Activated naive CD4-positive, alpha-beta T cell treated with anti-CD3 and anti-CD28 coated beads, Interleukin-2, amount 10 ng/mL, durations not matched to agents 7 days and 5 days (primary cell): ENCODE measurements at regions of chr18 and their contacts with region 1.

Region 1: GRCh38 chr18:74116633-74117554 is 30.7 kb downstream of the FBXO15 start:
- DNase-seq: peak; percentile 54
- H3K4me3 Mint-ChIP-seq: no peak overlapping the region
- H3K27ac Mint-ChIP-seq: no peak overlapping the region
- H3K4me1 Mint-ChIP-seq: peaks cover 9% of the 10 kb centered on the region
- H3K27me3 Mint-ChIP-seq: no peaks in the 10 kb centered on the region

Region 2: GRCh38 chr18:73980289-73980979 is 136.5 kb before region 1 on chr18:
- CTCF ChIA-PET with region 1: no interaction called
- DNase-seq: no peak
- H3K4me3 Mint-ChIP-seq: no peak overlapping the region
- H3K27ac Mint-ChIP-seq: peak overlapping the region; percentile 28
- H3K4me1 Mint-ChIP-seq: peaks cover 6% of the 10 kb centered on the region
- H3K27me3 Mint-ChIP-seq: peaks cover 9% of the 10 kb centered on the region

Region 3: DNA sequence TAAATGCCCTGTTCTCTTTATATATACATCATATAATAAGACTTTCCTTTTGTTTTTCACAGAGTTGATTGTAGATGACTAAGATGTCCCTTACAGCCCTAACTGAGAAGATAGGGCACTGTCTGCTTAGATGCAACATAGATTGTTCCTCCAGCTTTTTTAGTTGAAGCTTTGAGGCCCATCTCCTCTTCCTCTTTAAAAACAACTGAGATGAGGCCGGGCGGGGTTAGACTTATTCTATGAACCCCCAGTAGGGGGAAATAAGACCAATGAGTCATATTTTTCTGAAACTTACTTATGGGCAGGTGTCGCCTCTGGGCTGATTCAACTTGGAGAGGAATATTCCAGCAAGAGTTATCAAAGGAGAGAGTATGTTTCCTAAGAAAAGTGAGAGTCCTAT is 53.9 kb before region 1 on chr18:
- CTCF ChIA-PET with region 1: interaction called, 29 read pairs
- DNase-seq: peak; percentile 53
- H3K4me3 Mint-ChIP-seq: no peak overlapping the region
- H3K27ac Mint-ChIP-seq: peak overlapping the region; percentile 71
- H3K4me1 Mint-ChIP-seq: peaks cover 43% of the 10 kb centered on the region
- H3K27me3 Mint-ChIP-seq: no peaks in the 10 kb centered on the region

Region 4: GRCh38 chr18:74073957-74074667 is 42.8 kb before region 1 on chr18:
- CTCF ChIA-PET with region 1: no interaction called
- DNase-seq: no peak
- H3K4me3 Mint-ChIP-seq: no peak overlapping the region
- H3K27ac Mint-ChIP-seq: no peak overlapping the region
- H3K4me1 Mint-ChIP-seq: no peaks in the 10 kb centered on the region
- H3K27me3 Mint-ChIP-seq: peaks cover 13% of the 10 kb centered on the region

Region 5: GRCh38 chr18:74139888-74140287 is 23.0 kb after region 1 on chr18:
- CTCF ChIA-PET with region 1: interaction called, 11 read pairs
- DNase-seq: no peak
- H3K4me3 Mint-ChIP-seq: no peak overlapping the region
- H3K27ac Mint-ChIP-seq: no peak overlapping the region
- H3K4me1 Mint-ChIP-seq: peaks cover 6% of the 10 kb centered on the region
- H3K27me3 Mint-ChIP-seq: peaks cover 7% of the 10 kb centered on the region

Region 6: GRCh38 chr18:74204526-74205152 is 87.7 kb after region 1 on chr18:
- CTCF ChIA-PET with region 1: no interaction called
- DNase-seq: no peak
- H3K4me3 Mint-ChIP-seq: no peak overlapping the region
- H3K27ac Mint-ChIP-seq: no peak overlapping the region
- H3K4me1 Mint-ChIP-seq: no peaks in the 10 kb centered on the region
- H3K27me3 Mint-ChIP-seq: peaks cover 9% of the 10 kb centered on the region

Region 7: DNA sequence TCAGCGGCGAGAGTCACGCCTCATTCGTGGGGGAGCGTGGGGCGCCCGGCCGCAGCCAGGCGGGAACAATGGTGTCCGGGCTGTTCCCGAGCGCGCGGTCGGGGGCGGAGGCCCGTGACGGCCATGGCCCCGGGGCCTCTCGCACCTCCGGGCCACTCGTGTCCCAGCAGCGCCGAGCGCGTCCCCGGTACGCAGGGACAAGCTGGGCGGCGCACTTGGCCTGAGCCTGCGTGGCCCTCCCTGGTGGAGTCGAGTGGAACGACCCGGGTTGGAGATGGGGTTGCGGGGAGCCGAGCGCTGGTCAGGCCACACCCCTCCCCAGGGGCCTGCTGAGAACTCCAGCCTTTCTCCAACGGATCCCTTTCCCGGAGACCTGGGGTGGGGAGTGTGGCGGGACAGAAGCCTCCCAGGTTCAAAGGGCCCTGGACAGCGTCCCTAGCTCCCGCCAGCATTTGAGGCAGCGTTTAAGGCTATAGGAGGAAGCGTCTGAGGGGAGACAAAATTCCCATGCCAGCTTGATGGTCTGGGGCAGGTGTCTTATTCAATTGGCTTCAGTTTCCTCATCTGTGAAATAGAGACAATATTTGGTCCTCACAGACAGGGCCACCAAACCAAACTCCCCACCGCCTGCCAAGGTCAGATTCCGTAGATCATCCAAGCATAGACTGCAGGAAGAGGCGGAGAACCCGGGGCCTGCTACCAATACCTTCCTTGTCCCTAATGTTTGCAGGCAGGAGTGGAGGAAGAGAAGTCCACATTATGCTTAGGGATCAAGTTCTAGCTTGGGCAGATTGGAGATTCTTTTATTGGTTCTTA is 379.8 kb after region 1 on chr18:
- CTCF ChIA-PET with region 1: no interaction called
- DNase-seq: peak; percentile 60
- H3K4me3 Mint-ChIP-seq: peak overlapping the region; percentile 82
- H3K27ac Mint-ChIP-seq: peak overlapping the region; percentile 95
- H3K4me1 Mint-ChIP-seq: peaks cover 61% of the 10 kb centered on the region
- H3K27me3 Mint-ChIP-seq: peaks cover 22% of the 10 kb centered on the region